MCF 10A (cell line): ENCODE measurements at regions of chr1 and their contacts with region 1.

Region 1: GRCh38 chr1:169367486-169368405 is at the starts of genes BLZF1 and NME7:
- DNase-seq: peak; percentile 99
- H3K4me3 Mint-ChIP-seq: no peak within 1 kb of the TSS
- H3K27ac Mint-ChIP-seq: no peak within 1 kb of the TSS
- H3K4me1 Mint-ChIP-seq: peaks cover 24% of the 10 kb centered on the region
- H3K27me3 Mint-ChIP-seq: no peaks in the 10 kb centered on the region
- CTCF ChIP-seq: no peak
- total RNA-seq, gene BLZF1: 57.8 and 66.1 TPM in 2 replicates
- total RNA-seq, gene NME7: 36.5 and 46.8 TPM in 2 replicates

Region 2: GRCh38 chr1:168709405-168710305 is 658.1 kb before region 1 on chr1:
- CTCF ChIA-PET with region 1: no interaction called
- POLR2A ChIA-PET with region 1: interaction called, 4 read pairs
- intact Hi-C with region 1: loop called (anchors 10 kb)
- DNase-seq: peak; percentile 97
- H3K4me3 Mint-ChIP-seq: peak overlapping the region; percentile 1
- H3K27ac Mint-ChIP-seq: peak overlapping the region; percentile 80
- H3K4me1 Mint-ChIP-seq: peaks cover 33% of the 10 kb centered on the region
- H3K27me3 Mint-ChIP-seq: no peaks in the 10 kb centered on the region
- CTCF ChIP-seq: no peak

Region 3: GRCh38 chr1:169106095-169106920 is 261.4 kb before region 1 on chr1 and contains the start of gene ATP1B1:
- CTCF ChIA-PET with region 1: interaction called, 4 read pairs
- POLR2A ChIA-PET with region 1: interaction called, 37 read pairs
- intact Hi-C with region 1: loop called (anchors 5 kb)
- DNase-seq: peak; percentile 92
- H3K4me3 Mint-ChIP-seq: peak within 1 kb of the TSS; percentile 80
- H3K27ac Mint-ChIP-seq: peak within 1 kb of the TSS; percentile 96
- H3K4me1 Mint-ChIP-seq: peaks cover 49% of the 10 kb centered on the region
- H3K27me3 Mint-ChIP-seq: no peaks in the 10 kb centered on the region
- CTCF ChIP-seq: peak; percentile 60
- total RNA-seq, gene ATP1B1: 20.0 and 24.4 TPM in 2 replicates

Region 4: DNA sequence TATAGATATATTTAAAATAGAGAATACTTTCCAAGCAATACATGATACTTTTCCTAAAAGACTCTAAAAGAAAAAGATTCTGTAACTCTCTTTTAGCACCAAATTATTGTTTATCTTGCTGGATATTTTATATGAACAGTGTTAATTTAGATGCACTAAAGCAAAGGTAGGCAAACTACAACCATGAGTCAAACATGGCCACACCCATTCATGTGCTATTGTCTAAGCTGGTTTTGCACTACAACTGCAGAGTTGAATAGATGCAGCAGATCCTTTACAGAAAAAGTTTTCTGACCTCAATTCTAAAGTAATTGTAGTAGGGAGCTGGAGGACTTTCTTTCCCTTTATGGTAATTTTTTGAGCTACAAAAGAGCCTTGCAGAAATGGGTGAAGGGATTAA is 19.6 kb after region 1 on chr1:
- CTCF ChIA-PET with region 1: interaction called, 3 read pairs
- POLR2A ChIA-PET with region 1: interaction called, 10 read pairs
- intact Hi-C with region 1: no loop called
- DNase-seq: no peak
- H3K4me3 Mint-ChIP-seq: no peak overlapping the region
- H3K27ac Mint-ChIP-seq: no peak overlapping the region
- H3K4me1 Mint-ChIP-seq: no peaks in the 10 kb centered on the region
- H3K27me3 Mint-ChIP-seq: no peaks in the 10 kb centered on the region
- CTCF ChIP-seq: no peak

Region 5: GRCh38 chr1:169511316-169512028 is 143.7 kb after region 1 on chr1:
- CTCF ChIA-PET with region 1: interaction called, 3 read pairs
- POLR2A ChIA-PET with region 1: interaction called, 12 read pairs
- intact Hi-C with region 1: no loop called
- DNase-seq: peak; percentile 86
- H3K4me3 Mint-ChIP-seq: peak overlapping the region; percentile 5
- H3K27ac Mint-ChIP-seq: peak overlapping the region; percentile 86
- H3K4me1 Mint-ChIP-seq: peaks cover 62% of the 10 kb centered on the region
- H3K27me3 Mint-ChIP-seq: no peaks in the 10 kb centered on the region
- CTCF ChIP-seq: no peak

Region 6: DNA sequence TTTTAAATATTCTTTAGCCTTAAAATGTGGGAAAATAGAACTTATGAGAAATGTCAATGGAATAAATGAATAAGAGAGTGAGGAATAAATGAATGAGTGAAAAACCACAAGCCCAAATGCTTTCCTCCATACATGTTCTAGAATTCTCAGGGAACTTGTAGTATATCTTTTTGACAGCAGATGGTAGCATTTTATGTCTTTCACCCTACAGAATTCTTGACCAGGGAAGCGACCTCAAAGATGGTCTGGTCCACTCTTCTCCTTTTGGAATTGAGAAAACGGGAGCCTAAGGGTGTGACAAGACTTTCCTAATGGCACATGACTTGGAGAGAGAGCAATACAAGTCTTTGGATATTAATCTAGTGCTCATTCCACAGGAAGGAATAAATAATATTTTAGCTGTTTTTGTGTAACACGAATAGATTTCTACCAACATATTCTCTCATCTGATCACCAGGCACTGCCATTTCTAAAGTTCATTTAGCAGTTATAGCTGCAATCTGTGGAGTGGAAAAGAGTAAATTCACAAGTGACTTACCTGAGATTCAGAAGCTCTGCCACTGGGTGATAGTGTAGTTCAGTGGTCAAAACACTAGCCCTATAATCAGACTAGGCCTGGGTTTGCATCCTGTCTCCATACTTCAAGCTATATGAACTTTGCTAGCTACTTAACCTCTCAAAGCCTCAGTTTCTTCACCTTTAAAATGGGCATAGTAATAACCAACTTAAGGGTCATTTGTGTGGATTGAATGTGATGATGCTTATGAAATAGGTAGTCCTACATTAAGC is 233.5 kb after region 1 on chr1:
- CTCF ChIA-PET with region 1: no interaction called
- POLR2A ChIA-PET with region 1: no interaction called
- intact Hi-C with region 1: no loop called
- DNase-seq: peak; percentile 55
- H3K4me3 Mint-ChIP-seq: no peak overlapping the region
- H3K27ac Mint-ChIP-seq: no peak overlapping the region
- H3K4me1 Mint-ChIP-seq: no peaks in the 10 kb centered on the region
- H3K27me3 Mint-ChIP-seq: peaks cover 34% of the 10 kb centered on the region
- CTCF ChIP-seq: peak; percentile 42

Region 7: DNA sequence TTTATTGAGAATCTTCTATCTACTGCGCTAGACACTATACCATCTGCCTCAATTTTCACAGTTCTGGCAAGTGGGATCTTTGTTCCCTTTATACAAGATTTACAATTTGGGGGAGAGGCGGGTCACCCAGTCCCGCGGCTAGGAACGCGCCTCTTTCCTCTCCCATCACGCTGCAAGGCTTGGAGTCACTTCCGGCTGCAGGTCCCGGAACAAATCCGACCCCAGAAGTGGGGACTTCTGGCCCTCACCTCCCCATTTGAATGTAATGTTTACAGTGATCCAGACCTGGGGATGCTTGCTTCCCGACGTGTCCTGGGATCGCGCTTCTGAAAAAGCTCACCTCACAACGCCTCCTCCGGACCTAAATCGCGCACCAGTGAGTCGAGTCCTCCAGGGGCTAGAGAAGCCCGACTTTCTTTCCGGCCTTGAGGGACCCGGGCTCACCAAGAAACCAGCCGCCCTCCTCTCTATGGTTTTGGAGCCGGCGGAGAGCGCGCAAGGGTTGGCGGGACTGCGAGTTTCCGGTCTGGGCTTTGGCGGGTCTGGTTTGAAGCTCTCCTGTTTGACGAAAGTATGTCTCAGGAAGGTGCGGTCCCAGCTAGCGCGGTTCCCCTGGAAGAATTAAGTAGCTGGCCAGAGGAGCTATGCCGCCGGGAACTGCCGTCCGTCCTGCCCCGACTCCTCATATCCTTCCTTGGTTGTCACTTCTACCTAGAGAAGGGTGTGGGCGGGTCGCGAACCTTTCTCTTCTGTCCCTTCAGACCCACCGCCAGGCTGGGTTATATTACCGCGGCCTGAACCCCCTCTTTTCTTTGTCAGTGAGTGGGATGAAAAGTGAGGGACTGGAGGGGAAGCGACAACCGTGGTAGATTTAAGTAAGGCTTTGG is 427.0 kb after region 1 on chr1 and contains the start of gene METTL18:
- CTCF ChIA-PET with region 1: interaction called, 4 read pairs
- POLR2A ChIA-PET with region 1: interaction called, 6 read pairs
- intact Hi-C with region 1: loop called (anchors 10 kb)
- DNase-seq: peak; percentile 98
- H3K4me3 Mint-ChIP-seq: peak within 1 kb of the TSS; percentile 100
- H3K27ac Mint-ChIP-seq: peak within 1 kb of the TSS; percentile 99
- H3K4me1 Mint-ChIP-seq: peaks cover 10% of the 10 kb centered on the region
- H3K27me3 Mint-ChIP-seq: no peaks in the 10 kb centered on the region
- CTCF ChIP-seq: peak; percentile 53
- total RNA-seq, gene METTL18: 2.8 and 4.1 TPM in 2 replicates